A673 (cell line): ENCODE measurements at regions of chr20 and their contacts with region 1.

Region 1: DNA sequence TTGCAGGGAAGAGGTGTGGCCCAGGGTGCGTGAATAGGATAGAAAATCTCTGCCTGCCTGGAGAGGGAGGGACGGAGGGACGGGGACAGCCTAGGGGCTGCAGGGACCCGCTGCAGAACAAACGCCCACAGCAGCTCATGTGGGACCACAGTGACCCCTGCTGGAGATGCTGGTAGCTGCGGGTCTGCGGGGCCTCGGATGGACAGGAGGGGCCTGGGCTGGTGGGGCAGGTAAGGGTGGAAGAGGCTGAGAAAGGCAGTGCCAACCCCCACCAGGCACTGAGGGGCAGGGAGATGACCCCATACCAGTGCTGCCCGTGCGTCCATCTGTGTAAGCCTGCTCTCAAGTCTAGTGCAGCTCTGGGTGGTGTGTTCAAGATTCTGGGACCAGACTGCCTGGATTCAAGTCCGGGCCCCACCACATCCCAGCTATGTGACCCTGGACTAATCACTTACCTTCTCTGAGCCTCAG is 39.4 kb downstream of the KIAA1755 start:
- DNase-seq: peak; percentile 77
- H3K4me3 ChIP-seq: no peak overlapping the region
- H3K27ac ChIP-seq: no peak overlapping the region
- H3K4me1 ChIP-seq: no peaks in the 10 kb centered on the region
- H3K27me3 ChIP-seq: no peaks in the 10 kb centered on the region
- CTCF ChIP-seq: peak; percentile 93

Region 2: DNA sequence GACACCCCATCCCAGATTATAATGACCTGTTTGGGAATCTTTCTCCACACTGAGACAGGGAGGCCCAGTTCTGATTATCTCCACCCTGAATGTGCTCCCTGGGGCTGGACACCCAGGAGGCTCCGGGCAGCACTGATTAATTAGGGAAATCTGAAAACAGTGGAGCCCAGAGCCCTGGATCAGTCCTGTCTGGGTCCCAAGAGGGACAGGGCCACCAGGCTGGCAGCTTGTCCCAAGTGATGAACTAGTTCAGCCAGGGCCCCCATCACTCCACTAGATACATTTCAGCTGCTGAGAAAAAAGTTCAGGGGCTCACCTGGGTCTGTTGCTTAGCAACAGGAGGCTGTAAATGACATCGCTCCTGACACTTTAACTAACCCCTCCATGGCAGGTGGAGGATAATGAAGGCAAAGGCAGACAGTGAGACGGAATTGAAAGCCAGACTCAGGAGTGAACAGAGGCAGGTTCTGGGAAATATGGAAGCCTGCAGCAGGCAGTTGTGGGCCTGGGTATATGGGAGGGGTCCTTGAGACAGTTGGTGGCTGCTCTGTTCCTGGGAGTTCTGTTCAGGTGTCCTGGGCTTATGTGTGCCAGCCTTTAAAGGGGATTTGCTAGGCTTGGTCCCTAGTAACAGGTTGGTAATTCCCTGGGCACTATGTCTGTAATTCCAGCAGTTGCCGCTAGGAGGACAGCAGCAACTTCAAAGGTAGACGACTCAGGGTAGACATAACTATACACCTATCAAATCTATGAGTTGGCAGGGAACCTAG is 605.6 kb before region 1 on chr20:
- CTCF ChIA-PET with region 1: no interaction called
- POLR2A ChIA-PET with region 1: no interaction called
- intact Hi-C with region 1: loop called (anchors 5 kb)
- DNase-seq: peak; percentile 56
- H3K4me3 ChIP-seq: no peak overlapping the region
- H3K27ac ChIP-seq: no peak overlapping the region
- H3K4me1 ChIP-seq: no peaks in the 10 kb centered on the region
- H3K27me3 ChIP-seq: peaks cover 19% of the 10 kb centered on the region
- CTCF ChIP-seq: peak; percentile 85

Region 3: GRCh38 chr20:38043512-38044300 is 177.4 kb before region 1 on chr20:
- CTCF ChIA-PET with region 1: interaction called, 10 read pairs
- POLR2A ChIA-PET with region 1: no interaction called
- intact Hi-C with region 1: no loop called
- DNase-seq: peak; percentile 30
- H3K4me3 ChIP-seq: no peak overlapping the region
- H3K27ac ChIP-seq: no peak overlapping the region
- H3K4me1 ChIP-seq: no peaks in the 10 kb centered on the region
- H3K27me3 ChIP-seq: no peaks in the 10 kb centered on the region
- CTCF ChIP-seq: no peak

Region 4: DNA sequence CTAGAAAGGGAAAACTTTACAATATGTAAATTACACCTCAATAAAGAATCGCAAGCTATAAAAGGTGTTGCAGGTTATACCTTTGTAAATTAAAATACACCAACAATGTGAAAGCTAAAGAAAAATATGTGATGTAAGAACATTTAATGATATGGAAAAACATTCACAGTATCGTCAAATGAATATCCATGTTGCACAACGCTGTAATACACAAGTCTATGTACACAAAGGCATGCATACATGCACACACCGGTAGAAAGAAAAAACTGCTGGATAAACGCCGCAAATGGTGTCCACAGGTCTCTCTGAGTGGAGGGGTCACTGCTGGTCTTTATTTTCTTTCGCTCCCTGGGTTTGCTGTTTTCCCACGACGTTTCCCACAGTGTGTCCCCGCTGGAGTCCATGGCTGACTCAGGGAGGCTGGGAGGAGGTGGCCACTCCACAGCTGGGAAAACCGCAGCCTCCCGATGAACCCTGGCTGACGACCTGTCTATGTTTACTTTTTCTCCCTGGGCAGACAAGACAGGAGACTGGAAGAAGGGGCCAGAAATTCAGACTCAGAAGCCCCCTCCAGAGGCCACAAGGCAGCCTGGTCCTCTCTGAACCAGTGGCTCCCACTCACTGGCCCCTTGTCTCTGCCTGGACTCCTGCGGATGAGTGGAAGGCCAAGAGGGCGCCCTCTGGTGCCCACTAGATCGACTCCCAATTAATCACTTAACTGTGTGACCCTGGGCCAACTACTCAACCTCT is 69.9 kb after region 1 on chr20:
- CTCF ChIA-PET with region 1: no interaction called
- POLR2A ChIA-PET with region 1: no interaction called
- intact Hi-C with region 1: no loop called
- DNase-seq: peak; percentile 22
- H3K4me3 ChIP-seq: no peak overlapping the region
- H3K27ac ChIP-seq: no peak overlapping the region
- H3K4me1 ChIP-seq: no peaks in the 10 kb centered on the region
- H3K27me3 ChIP-seq: no peaks in the 10 kb centered on the region
- CTCF ChIP-seq: peak; percentile 50